Activated naive CD4-positive, alpha-beta T cell treated with anti-CD3 and anti-CD28 coated beads for 36 hours (primary cell): ENCODE measurements at regions of chr21 and their contacts with region 1.

Region 1: GRCh38 chr21:36319765-36320420 is at the start of gene MORC3:
- DNase-seq: peak; percentile 98
- H3K4me3 Mint-ChIP-seq: peak within 1 kb of the TSS; percentile 94
- H3K27ac Mint-ChIP-seq: peak within 1 kb of the TSS; percentile 96
- H3K4me1 Mint-ChIP-seq: peaks cover 38% of the 10 kb centered on the region
- H3K27me3 Mint-ChIP-seq: no peaks in the 10 kb centered on the region
- total RNA-seq, gene MORC3: 26.7 to 28.6 TPM

Region 2: DNA sequence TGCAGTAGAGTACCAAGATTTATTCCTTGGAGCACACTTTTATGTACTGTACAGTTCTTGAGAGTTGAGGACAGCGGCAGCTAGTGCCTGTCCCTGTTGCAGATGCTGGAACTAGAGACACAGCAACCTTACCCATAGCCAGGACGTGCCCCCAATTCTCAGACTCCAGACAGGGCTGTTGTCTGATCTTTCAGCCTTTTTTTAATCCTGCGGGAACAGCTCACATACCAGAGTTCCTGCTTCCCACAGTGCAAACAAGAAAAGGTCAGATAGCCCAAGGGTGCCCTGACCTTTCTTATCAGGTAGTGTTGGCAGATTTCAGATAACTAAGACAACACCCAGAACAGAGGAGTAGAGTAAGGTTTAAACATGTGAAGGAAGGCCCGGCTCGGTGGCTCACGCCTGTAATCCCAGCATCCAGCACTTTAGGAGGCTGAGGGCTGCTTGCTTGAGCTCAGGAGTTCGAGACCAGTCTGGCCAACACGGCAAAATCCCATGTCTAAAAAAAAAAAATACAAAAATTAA is 84.8 kb before region 1 on chr21:
- CTCF ChIA-PET with region 1: no interaction called
- intact Hi-C with region 1: loop called (anchors 5 kb)
- DNase-seq: no peak
- H3K4me3 Mint-ChIP-seq: no peak overlapping the region
- H3K27ac Mint-ChIP-seq: no peak overlapping the region
- H3K4me1 Mint-ChIP-seq: peaks cover 15% of the 10 kb centered on the region
- H3K27me3 Mint-ChIP-seq: no peaks in the 10 kb centered on the region

Region 3: GRCh38 chr21:36288651-36289243 is 31.1 kb before region 1 on chr21:
- CTCF ChIA-PET with region 1: interaction called, 13 read pairs
- intact Hi-C with region 1: loop called (anchors 1 kb)
- DNase-seq: no peak
- H3K4me3 Mint-ChIP-seq: peak overlapping the region; percentile 48
- H3K27ac Mint-ChIP-seq: peak overlapping the region; percentile 91
- H3K4me1 Mint-ChIP-seq: peaks cover 24% of the 10 kb centered on the region
- H3K27me3 Mint-ChIP-seq: no peaks in the 10 kb centered on the region

Region 4: GRCh38 chr21:36297921-36298594 is 21.8 kb before region 1 on chr21:
- CTCF ChIA-PET with region 1: interaction called, 11 read pairs
- intact Hi-C with region 1: loop called (anchors 1 kb)
- DNase-seq: peak; percentile 86
- H3K4me3 Mint-ChIP-seq: peak overlapping the region; percentile 40
- H3K27ac Mint-ChIP-seq: peak overlapping the region; percentile 85
- H3K4me1 Mint-ChIP-seq: peaks cover 50% of the 10 kb centered on the region
- H3K27me3 Mint-ChIP-seq: no peaks in the 10 kb centered on the region

Region 5: GRCh38 chr21:36385233-36386030 is 65.5 kb after region 1 on chr21 and contains the start of gene CHAF1B:
- CTCF ChIA-PET with region 1: no interaction called
- intact Hi-C with region 1: loop called (anchors 1 kb)
- DNase-seq: peak; percentile 82
- H3K4me3 Mint-ChIP-seq: peak within 1 kb of the TSS; percentile 80
- H3K27ac Mint-ChIP-seq: peak within 1 kb of the TSS; percentile 46
- H3K4me1 Mint-ChIP-seq: peaks cover 20% of the 10 kb centered on the region
- H3K27me3 Mint-ChIP-seq: no peaks in the 10 kb centered on the region
- total RNA-seq, gene CHAF1B: 30.5 to 31.9 TPM

Region 6: GRCh38 chr21:36966066-36966820 is 646.4 kb after region 1 on chr21 and contains the start of gene HLCS:
- CTCF ChIA-PET with region 1: no interaction called
- intact Hi-C with region 1: loop called (anchors 10 kb)
- DNase-seq: peak; percentile 72
- H3K4me3 Mint-ChIP-seq: peak within 1 kb of the TSS; percentile 78
- H3K27ac Mint-ChIP-seq: peak within 1 kb of the TSS; percentile 86
- H3K4me1 Mint-ChIP-seq: peaks cover 12% of the 10 kb centered on the region
- H3K27me3 Mint-ChIP-seq: no peaks in the 10 kb centered on the region
- total RNA-seq, gene HLCS: 12.5 to 12.6 TPM